ENCODE measurements at regions of chr11 and their contacts with region 1.

Region 1: DNA sequence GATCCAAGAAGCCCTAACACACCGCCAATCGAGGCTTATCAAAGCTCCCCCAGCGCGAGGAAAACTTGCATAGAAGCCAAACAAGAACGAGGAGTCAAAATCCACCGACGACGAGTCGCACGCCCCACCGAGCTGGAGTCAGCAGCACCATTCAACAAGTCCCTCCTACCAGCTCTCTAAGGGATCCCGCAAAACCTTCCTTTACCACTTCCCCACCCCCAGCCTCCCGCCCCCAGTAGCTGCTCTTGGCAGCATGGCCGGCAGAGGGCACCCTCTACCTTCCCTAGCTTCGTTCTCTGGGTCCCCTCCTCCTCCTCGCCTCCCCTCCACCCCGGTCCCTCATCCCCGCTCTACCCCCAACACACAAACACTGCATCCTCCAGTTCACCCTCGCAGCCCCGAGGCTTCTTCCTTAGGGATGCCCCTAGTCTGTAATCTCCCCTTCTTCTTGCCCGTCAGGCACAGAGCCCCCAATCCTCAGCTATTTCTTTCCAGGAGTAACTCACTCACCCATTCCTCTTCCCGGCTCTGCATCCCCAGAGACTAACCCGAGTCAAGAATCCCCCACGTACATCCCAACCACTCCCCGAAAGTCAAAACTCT is 1.3 kb downstream of the BDNF start:
- DNase-seq: peak; percentile 71 to 86 (median 82)
- ATAC-seq: peak; percentile 87 to 90 (median 89)
- H3K4me3 ChIP-seq: peak overlapping the region; percentile 43 to 73 (median 63)
- H3K27ac ChIP-seq: peak overlapping the region; percentile 31 to 87 (median 74)
- H3K4me1 ChIP-seq: peaks cover 0 to 35% (median 12%) of the 10 kb centered on the region in 12 donors
- H3K27me3 ChIP-seq: peaks cover 0 to 72% (median 15%) of the 10 kb centered on the region in 9 donors
- CTCF ChIP-seq: peak; percentile 60 to 88 (median 74)
- POLR2A ChIP-seq: no peak

Region 2: DNA sequence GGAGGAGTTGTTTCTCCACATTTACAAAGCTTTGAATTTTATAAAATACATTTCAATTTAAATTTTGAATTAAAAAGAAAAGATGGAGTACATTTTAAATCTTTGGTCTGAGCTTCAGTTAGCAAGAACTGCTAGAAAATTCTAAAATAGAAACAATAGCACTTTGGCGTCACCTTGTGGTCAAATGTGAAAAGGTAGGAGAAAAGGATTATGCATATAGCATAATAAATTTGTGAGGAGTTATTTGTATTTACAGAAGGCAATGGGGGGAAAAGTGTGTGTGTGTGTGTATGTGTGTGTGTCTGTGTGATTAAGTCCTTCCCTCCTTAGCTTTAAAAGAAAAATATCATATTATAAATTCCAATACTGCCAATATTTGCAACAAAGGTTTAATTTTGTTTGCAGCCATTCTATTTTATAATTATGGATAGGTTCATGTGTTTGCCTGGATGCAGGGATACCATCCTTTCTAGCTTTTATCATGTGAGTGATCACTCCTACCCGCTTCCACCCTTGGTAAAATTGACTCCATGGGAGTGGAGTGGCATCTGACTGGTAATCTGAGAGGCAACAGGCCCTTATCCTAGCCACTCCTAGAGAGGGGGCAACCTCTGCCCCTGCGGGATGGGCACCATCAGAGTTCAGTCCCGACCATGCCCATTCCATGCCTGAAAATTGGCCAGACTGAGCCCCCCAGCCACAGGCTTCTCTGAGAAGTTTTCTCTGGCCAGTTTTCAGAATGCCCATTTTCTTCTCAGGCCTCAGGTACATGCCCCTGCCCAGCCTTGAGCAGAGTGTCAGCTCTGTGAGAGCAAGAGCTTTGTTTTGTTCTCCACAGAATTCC is 212.8 kb before region 1 on chr11:
- intact Hi-C with region 1: no loop called
- DNase-seq: peak in 1 of 5 donors; percentile 24
- ATAC-seq: peak in 2 of 4 donors; percentile 40 to 50
- H3K4me3 ChIP-seq: no peak overlapping the region
- H3K27ac ChIP-seq: no peak overlapping the region
- H3K4me1 ChIP-seq: no peaks in the 10 kb centered on the region
- H3K27me3 ChIP-seq: no peaks in the 10 kb centered on the region
- CTCF ChIP-seq: peak; percentile 76 to 97 (median 90)
- POLR2A ChIP-seq: no peak

Region 3: DNA sequence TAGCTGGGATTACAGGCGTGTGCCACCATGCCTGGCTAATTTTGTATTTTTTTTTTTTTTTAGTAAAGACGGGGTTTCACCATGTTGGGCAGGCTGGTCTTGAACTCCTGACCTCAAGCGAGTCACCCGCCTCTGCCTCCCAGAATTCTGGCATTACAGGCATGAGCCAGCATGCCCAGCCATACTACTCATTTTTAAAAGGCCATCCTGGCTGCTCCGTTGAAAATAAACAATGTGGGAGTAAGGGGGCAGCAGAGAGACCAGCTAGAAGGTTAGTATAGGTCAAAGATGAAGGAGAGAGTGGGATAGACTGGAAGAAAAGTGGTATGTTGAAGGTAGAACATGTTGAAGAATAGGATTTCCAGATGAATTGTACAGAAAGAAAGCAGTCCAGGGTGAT is 174.8 kb before region 1 on chr11:
- intact Hi-C with region 1: loop called in 2 of 10 experiments (anchors 10 kb)
- DNase-seq: no peak
- ATAC-seq: no peak
- H3K4me3 ChIP-seq: no peak overlapping the region
- H3K27ac ChIP-seq: no peak overlapping the region
- H3K4me1 ChIP-seq: peaks cover 0 to 17% (median 1%) of the 10 kb centered on the region in 12 donors
- H3K27me3 ChIP-seq: no peaks in the 10 kb centered on the region
- CTCF ChIP-seq: peak in 4 of 12 donors; percentile 10 to 22 (median 18)
- POLR2A ChIP-seq: no peak

Region 4: GRCh38 chr11:27635567-27636037 is 63.4 kb before region 1 on chr11:
- intact Hi-C with region 1: no loop called
- DNase-seq: no peak
- ATAC-seq: no peak
- H3K4me3 ChIP-seq: no peak overlapping the region
- H3K27ac ChIP-seq: no peak overlapping the region
- H3K4me1 ChIP-seq: peaks cover 0 to under 1% (median 0%) of the 10 kb centered on the region in 12 donors
- H3K27me3 ChIP-seq: no peaks in the 10 kb centered on the region
- CTCF ChIP-seq: no peak
- POLR2A ChIP-seq: no peak

Region 5: GRCh38 chr11:28107748-28108618 is 409.0 kb after region 1 on chr11 and contains the starts of genes KIF18A and METTL15:
- intact Hi-C with region 1: loop called in 3 of 10 experiments (anchors 10 kb)
- DNase-seq: peak; percentile 99 to 100 (median 100)
- ATAC-seq: peak; percentile 100
- H3K4me3 ChIP-seq: peak within 1 kb of the TSS; percentile 35 to 87 (median 60)
- H3K27ac ChIP-seq: peak within 1 kb of the TSS in 11 of 12 donors; percentile 26 to 86 (median 76)
- H3K4me1 ChIP-seq: peaks cover 0 to 44% (median 34%) of the 10 kb centered on the region in 12 donors
- H3K27me3 ChIP-seq: no peaks in the 10 kb centered on the region
- CTCF ChIP-seq: no peak
- POLR2A ChIP-seq: peak in 1 of 2 donors; percentile 55
- total RNA-seq, gene KIF18A: 0.10 to 1.7 (median 0.27) TPM in 6 of 9 donors, not detected in the others
- total RNA-seq, gene METTL15: 6.2 to 14.4 (median 10.2) TPM

Region 6: DNA sequence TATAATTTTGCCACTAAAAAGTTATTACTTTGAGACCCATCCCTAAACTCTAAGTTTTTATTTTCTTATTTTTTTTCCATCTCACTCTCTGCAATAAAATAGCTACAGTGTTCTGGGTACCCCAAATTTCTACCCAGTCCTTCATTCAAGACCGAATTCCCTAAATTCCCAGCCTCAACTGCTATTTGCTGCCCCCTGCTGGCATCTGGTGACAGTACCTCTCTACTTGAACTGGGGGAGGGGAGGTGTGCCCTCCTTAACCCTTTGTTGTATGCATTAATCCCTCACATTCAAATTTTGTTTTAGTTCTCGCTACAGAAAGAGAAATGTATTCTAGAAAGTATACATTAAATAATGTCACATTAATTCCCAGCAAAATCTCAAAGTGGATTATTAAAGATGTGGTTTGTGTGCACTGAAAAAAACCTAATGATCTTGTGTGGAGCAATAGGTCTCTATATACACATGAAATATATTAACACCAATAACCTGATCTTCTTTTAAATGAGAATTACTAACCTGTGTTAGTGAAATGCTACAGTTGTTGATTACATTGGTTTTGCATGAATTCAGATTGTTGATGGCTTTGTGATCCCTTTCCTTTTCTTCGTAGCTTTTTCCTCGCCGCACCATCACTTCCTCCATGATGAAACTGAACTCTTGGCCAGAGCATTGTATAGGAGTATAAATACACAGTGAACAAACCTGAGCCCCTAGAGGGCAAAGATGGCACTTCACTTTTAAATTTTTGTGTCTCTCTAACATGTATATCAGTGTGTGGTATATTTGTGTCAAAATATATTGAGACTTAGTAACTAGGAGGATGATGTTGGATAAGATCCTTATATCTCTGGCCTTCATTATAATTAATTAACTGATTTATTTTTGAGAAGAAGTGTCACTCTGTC is 999.2 kb after region 1 on chr11:
- intact Hi-C with region 1: loop called in 9 of 10 experiments (anchors 2 to 5 kb)
- DNase-seq: peak in 4 of 5 donors; percentile 26 to 50 (median 38)
- ATAC-seq: peak in 3 of 4 donors; percentile 38 to 51 (median 49)
- H3K4me3 ChIP-seq: no peak overlapping the region
- H3K27ac ChIP-seq: no peak overlapping the region
- H3K4me1 ChIP-seq: no peaks in the 10 kb centered on the region
- H3K27me3 ChIP-seq: no peaks in the 10 kb centered on the region
- CTCF ChIP-seq: peak; percentile 65 to 83 (median 74)
- POLR2A ChIP-seq: no peak

Region 7: GRCh38 chr11:29333993-29334775 is 1635.2 kb after region 1 on chr11:
- intact Hi-C with region 1: loop called in 8 of 10 experiments (anchors 2 to 10 kb)
- DNase-seq: no peak
- ATAC-seq: peak in 3 of 4 donors; percentile 33 to 42 (median 34)
- H3K4me3 ChIP-seq: no peak overlapping the region
- H3K27ac ChIP-seq: no peak overlapping the region
- H3K4me1 ChIP-seq: no peaks in the 10 kb centered on the region
- H3K27me3 ChIP-seq: peaks cover 0 to 3% (median 0%) of the 10 kb centered on the region in 9 donors
- CTCF ChIP-seq: peak in 9 of 12 donors; percentile 8 to 48 (median 38)
- POLR2A ChIP-seq: no peak

Measured in heart left ventricle (tissue), 16 donors.